ENCODE measurements at regions of chr2 and their contacts with region 1.

Region 1: DNA sequence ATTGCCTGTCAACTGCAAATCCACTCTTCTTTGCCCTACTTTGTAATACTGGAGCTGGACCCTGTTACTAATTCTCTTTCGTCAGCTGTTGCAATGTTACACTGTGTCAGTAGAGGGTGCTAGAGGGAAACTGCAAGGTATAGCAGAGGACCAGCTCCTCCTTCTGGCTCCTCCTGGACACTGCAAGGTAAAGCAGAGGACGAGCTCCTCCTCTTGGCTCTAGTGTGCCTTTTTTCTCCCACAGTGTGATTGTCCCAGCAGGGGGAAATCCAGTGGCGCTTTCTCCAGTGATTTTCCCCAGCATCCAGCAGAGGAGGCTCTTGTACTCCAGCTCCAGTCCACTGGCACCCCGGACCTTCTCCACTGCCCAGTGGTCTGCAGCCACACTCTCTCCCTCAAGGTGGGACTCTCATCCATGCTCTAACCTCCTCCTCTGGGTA is 95.6 kb downstream of the CAPN13 start:
- DNase-seq: peak; percentile 83
- ATAC-seq: peak; percentile 93
- H3K4me3 ChIP-seq: no peak overlapping the region
- H3K27ac ChIP-seq: no peak overlapping the region
- H3K4me1 ChIP-seq: no peaks in the 10 kb centered on the region
- H3K27me3 ChIP-seq: no peaks in the 10 kb centered on the region
- CTCF ChIP-seq: peak; percentile 100

Region 2: DNA sequence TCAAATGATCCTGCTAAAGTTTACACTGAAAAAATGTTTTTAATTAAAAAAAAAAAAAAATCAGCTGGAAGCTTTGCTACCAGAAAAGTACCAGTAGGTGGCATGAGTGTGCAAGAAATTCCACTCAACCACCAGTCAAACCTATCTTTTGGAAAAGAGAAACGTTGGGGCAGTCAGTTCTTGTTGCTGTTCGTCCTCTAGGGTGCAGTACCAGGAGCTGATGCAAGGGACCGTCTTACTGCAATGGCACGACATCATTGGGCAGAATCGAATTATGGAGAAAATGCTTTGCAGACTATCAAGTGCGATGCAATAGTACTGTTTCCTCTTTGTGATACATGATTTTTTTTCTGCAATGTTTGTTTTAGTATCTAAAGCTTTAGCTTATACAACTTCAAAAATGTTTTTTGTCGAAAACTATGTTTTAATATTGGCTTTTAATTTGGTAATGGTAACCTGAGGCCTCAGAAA is 546.6 kb before region 1 on chr2:
- intact Hi-C with region 1: loop called (anchors 10 kb)
- DNase-seq: no peak
- ATAC-seq: peak; percentile 98
- H3K4me3 ChIP-seq: no peak overlapping the region
- H3K27ac ChIP-seq: no peak overlapping the region
- H3K4me1 ChIP-seq: no peaks in the 10 kb centered on the region
- H3K27me3 ChIP-seq: no peaks in the 10 kb centered on the region
- CTCF ChIP-seq: peak; percentile 89

Region 3: DNA sequence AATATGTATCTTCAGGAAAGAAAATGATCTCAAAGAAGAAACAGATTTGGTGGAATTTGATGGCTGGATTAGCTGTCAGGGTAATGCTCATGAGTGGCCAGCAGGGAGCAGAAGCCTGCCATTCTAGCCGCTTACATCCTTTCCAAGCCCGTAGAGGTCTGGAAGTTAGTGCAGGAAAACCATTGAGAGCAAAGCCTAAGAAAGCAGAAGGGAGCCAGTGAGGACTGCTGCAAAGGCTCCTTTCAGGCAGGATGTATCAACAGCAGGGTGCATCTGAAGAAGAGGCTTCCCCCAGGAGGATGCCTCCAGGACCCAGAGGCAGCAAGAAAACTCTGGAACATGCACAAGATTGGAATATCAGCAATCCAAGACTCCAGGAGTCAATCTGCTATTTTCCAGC is 503.2 kb before region 1 on chr2:
- intact Hi-C with region 1: loop called (anchors 5 kb)
- DNase-seq: no peak
- ATAC-seq: peak; percentile 91
- H3K4me3 ChIP-seq: no peak overlapping the region
- H3K27ac ChIP-seq: no peak overlapping the region
- H3K4me1 ChIP-seq: peaks cover 4% of the 10 kb centered on the region
- H3K27me3 ChIP-seq: no peaks in the 10 kb centered on the region
- CTCF ChIP-seq: peak; percentile 92

Region 4: GRCh38 chr2:30871980-30872789 is 160.5 kb after region 1 on chr2:
- intact Hi-C with region 1: no loop called
- DNase-seq: no peak
- ATAC-seq: peak; percentile 91
- H3K4me3 ChIP-seq: no peak overlapping the region
- H3K27ac ChIP-seq: peak overlapping the region; percentile 55
- H3K4me1 ChIP-seq: no peaks in the 10 kb centered on the region
- H3K27me3 ChIP-seq: no peaks in the 10 kb centered on the region
- CTCF ChIP-seq: no peak

Region 5: GRCh38 chr2:30927465-30928075 is 215.9 kb after region 1 on chr2:
- intact Hi-C with region 1: no loop called
- DNase-seq: no peak
- ATAC-seq: no peak
- H3K4me3 ChIP-seq: no peak overlapping the region
- H3K27ac ChIP-seq: no peak overlapping the region
- H3K4me1 ChIP-seq: no peaks in the 10 kb centered on the region
- H3K27me3 ChIP-seq: no peaks in the 10 kb centered on the region
- CTCF ChIP-seq: no peak

Region 6: GRCh38 chr2:31170071-31170698 is 458.5 kb after region 1 on chr2:
- intact Hi-C with region 1: loop called (anchors 10 kb)
- DNase-seq: no peak
- ATAC-seq: peak; percentile 92
- H3K4me3 ChIP-seq: no peak overlapping the region
- H3K27ac ChIP-seq: no peak overlapping the region
- H3K4me1 ChIP-seq: no peaks in the 10 kb centered on the region
- H3K27me3 ChIP-seq: no peaks in the 10 kb centered on the region
- CTCF ChIP-seq: peak; percentile 93

Region 7: DNA sequence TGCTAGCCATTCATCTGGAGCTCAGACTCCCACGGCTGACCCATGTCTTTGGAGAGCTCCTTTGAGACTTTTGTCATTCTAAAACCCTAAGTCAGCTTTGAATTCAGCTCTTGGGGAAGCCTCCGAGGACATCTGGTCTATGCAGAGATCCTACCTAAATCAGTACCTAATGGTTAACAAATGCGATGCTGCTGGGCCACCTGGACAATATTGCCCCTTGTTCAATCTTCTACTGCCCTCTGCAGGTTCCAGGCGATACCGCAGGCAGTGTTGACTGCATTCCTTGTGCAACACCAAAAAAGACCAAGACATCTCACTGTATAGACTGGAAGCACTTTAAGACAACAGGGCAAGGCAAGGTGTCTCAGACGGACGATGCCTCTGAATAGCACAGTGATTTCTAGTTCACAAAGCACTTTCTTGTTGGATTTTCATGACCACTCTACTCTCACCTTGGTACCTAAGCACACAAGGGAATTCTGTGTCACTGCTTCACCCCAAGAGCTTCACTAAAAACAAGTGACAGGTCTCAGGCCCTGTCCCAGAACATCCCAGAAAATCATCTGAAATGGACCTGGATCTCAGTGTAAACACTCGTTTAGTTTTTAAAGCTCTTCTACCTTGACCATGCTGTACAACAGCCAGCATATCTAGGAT is 622.0 kb after region 1 on chr2:
- intact Hi-C with region 1: loop called (anchors 5 kb)
- DNase-seq: peak; percentile 74
- ATAC-seq: peak; percentile 90
- H3K4me3 ChIP-seq: no peak overlapping the region
- H3K27ac ChIP-seq: no peak overlapping the region
- H3K4me1 ChIP-seq: no peaks in the 10 kb centered on the region
- H3K27me3 ChIP-seq: no peaks in the 10 kb centered on the region
- CTCF ChIP-seq: peak; percentile 96

Measured in upper lobe of right lung (tissue), 1 donor.